Activated naive CD4-positive, alpha-beta T cell treated with anti-CD3 and anti-CD28 coated beads for 36 hours (primary cell): ENCODE measurements at regions of chr2 and their contacts with region 1.

Region 1: DNA sequence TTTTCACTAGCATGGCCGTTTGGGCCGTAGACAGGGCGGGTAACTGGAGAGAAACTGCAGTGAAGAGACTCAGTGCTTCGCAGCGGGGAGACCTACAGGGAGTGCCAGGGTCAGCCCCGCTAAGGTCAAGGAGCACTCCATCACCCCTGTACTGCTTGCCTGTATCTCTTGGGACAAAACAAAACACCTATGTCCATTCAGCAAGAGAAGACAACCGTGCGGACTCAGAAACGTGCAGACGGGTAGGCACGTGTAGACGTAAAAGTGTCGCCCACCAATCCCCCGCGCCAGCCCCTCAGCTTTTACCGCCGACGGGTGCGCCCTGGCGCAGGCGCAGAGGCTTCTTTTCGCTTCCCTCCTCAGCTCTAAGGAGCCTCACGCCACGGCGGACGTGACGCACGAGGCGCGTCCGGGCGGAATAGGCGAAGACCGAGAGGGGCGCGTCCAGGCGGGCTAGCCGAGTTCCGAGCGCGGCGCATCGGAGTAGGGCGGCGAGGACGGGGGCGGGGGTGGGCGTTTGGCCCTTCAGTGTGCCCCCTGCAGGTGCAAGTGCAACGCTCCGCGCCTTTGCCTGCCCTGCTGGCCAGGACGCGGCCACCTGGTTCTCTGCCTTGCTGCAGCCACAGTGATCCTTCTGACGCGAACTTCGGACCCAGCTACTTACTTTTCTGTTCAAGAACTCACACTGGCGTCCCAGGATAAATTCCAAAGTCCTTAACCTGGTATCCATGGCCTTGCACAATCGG is 3.3 kb upstream of the SOS1 start:
- DNase-seq: peak; percentile 96
- H3K4me3 Mint-ChIP-seq: peak overlapping the region; percentile 88
- H3K27ac Mint-ChIP-seq: peak overlapping the region; percentile 97
- H3K4me1 Mint-ChIP-seq: peaks cover 39% of the 10 kb centered on the region
- H3K27me3 Mint-ChIP-seq: no peaks in the 10 kb centered on the region

Region 2: DNA sequence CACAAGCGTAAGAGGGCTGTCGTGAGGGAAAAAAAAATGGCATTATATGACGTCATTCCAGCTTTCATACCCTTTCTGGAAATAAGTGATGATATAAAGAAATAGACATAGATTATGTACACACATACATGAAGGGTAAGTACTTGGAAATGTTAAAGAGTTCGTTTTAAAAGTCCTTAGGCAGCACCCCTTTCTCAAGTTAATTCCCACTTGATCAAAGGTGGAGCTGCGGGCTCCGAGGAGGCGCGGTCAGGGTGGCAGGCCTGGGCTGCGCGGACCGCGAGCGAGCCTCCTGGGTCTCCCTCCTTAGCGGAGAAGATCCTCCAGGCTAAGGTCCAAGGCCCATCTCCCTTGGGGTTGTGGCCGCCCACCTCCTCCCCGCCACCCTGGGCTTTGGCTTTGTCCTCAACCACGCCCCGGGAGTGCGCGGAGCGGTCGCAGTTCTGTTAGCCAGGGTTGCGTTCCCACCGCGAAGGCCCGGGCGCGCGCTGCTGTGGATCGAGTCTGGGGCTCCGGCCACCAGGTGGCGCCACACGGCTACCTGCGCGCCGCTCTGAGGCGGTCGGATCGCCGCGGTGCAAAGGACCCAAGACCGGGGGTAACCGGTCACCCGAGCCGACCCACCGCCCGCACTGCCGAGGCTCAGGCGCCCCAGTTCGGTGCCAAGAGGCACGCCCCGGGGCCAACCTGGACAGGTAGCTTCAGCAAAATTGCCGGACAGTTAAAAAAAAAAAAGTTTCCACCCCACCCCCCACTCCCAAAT is 588.2 kb before region 1 on chr2:
- CTCF ChIA-PET with region 1: no interaction called
- intact Hi-C with region 1: loop called (anchors 10 kb)
- DNase-seq: peak; percentile 84
- H3K4me3 Mint-ChIP-seq: peak overlapping the region; percentile 54
- H3K27ac Mint-ChIP-seq: no peak overlapping the region
- H3K4me1 Mint-ChIP-seq: no peaks in the 10 kb centered on the region
- H3K27me3 Mint-ChIP-seq: peaks cover 5% of the 10 kb centered on the region

Region 3: DNA sequence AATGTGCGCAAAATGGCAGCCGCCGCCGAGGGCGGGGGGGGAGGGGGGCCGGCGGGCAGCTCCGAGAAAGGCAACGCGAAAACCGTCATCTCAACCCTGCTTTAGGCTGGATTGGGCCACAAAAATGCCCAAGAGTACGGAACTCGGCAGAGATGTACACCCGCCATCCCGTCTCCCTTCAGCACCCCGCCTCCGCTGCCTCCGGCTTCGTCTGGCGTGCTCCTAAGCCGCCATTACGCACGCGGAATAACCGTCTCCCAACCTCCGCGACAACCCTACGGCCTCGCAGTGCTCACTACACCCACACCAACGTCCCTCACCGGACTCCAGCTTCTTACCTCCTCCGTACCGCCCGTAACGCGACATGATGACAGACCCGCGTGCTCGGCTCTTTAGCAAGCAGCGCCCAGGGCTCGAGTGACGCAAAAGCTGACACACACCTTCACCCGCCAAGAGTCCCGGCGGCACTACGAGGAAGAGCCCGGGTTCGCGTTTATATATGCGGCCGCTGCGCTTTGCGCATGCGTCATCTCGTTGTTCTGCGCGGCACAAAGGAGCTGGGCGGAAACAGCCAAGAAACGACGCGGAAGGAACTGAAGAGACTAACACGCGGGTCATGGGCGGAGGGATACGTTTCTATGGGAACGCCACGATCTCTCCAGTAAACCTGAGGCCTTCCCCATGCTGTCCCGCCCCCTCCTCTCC is 373.1 kb before region 1 on chr2 and contains the start of gene SRSF7:
- CTCF ChIA-PET with region 1: no interaction called
- intact Hi-C with region 1: loop called (anchors 1 kb)
- DNase-seq: peak; percentile 97
- H3K4me3 Mint-ChIP-seq: peak within 1 kb of the TSS; percentile 100
- H3K27ac Mint-ChIP-seq: peak within 1 kb of the TSS; percentile 100
- H3K4me1 Mint-ChIP-seq: peaks cover 52% of the 10 kb centered on the region
- H3K27me3 Mint-ChIP-seq: peaks cover 3% of the 10 kb centered on the region
- total RNA-seq, gene SRSF7: 212 to 217 TPM

Region 4: GRCh38 chr2:39059366-39059952 is 64.7 kb before region 1 on chr2:
- CTCF ChIA-PET with region 1: interaction called, 6 read pairs
- intact Hi-C with region 1: loop called (anchors 1 kb)
- DNase-seq: no peak
- H3K4me3 Mint-ChIP-seq: no peak overlapping the region
- H3K27ac Mint-ChIP-seq: no peak overlapping the region
- H3K4me1 Mint-ChIP-seq: peaks cover 2% of the 10 kb centered on the region
- H3K27me3 Mint-ChIP-seq: no peaks in the 10 kb centered on the region

Region 5: GRCh38 chr2:39227628-39228412 is 103.6 kb after region 1 on chr2:
- CTCF ChIA-PET with region 1: interaction called, 53 read pairs
- intact Hi-C with region 1: loop called (anchors 1 kb)
- DNase-seq: peak; percentile 89
- H3K4me3 Mint-ChIP-seq: peak overlapping the region; percentile 66
- H3K27ac Mint-ChIP-seq: no peak overlapping the region
- H3K4me1 Mint-ChIP-seq: peaks cover 15% of the 10 kb centered on the region
- H3K27me3 Mint-ChIP-seq: no peaks in the 10 kb centered on the region

Region 6: GRCh38 chr2:39513641-39514094 is 389.5 kb after region 1 on chr2:
- CTCF ChIA-PET with region 1: no interaction called
- intact Hi-C with region 1: loop called (anchors 1 kb)
- DNase-seq: peak; percentile 89
- H3K4me3 Mint-ChIP-seq: no peak overlapping the region
- H3K27ac Mint-ChIP-seq: peak overlapping the region; percentile 6
- H3K4me1 Mint-ChIP-seq: peaks cover 34% of the 10 kb centered on the region
- H3K27me3 Mint-ChIP-seq: no peaks in the 10 kb centered on the region